ENCODE measurements at regions of chr15 and their contacts with region 1.

Region 1: GRCh38 chr15:49059491-49059890 is 13.2 kb upstream of the SECISBP2L start:
- DNase-seq: no peak
- ATAC-seq: no peak
- H3K4me3 ChIP-seq: no peak overlapping the region
- H3K27ac ChIP-seq: no peak overlapping the region
- H3K4me1 ChIP-seq: no peaks in the 10 kb centered on the region
- H3K27me3 ChIP-seq: no peaks in the 10 kb centered on the region
- CTCF ChIP-seq: no peak
- POLR2A ChIP-seq: no peak

Region 2: DNA sequence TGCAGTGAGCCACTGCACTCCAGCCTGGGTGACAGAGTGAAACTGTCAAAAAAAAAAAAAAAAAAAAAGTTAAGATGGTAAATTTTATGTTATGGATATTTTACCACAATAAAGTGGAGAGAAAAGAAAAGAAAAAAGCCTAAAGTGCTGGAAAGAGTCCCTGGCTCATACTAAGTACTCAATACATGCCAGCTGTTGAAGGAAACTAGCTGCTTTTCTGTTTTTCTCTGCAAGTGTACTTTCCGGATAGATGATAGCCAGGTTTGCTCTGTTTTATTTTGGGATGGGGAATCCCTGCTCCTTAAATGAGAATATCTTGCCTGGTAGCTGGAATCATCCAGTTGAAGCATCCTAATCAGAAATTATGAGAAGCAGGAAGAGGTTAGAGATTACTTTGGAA is 170.7 kb before region 1 on chr15:
- intact Hi-C with region 1: loop called (anchors 10 kb)
- DNase-seq: no peak
- ATAC-seq: no peak
- H3K4me3 ChIP-seq: no peak overlapping the region
- H3K27ac ChIP-seq: no peak overlapping the region
- H3K4me1 ChIP-seq: no peaks in the 10 kb centered on the region
- H3K27me3 ChIP-seq: no peaks in the 10 kb centered on the region
- CTCF ChIP-seq: no peak
- POLR2A ChIP-seq: no peak

Region 3: GRCh38 chr15:48992545-48992944 is 66.9 kb before region 1 on chr15:
- intact Hi-C with region 1: loop called (anchors 10 kb)
- DNase-seq: no peak
- ATAC-seq: no peak
- H3K4me3 ChIP-seq: no peak overlapping the region
- H3K27ac ChIP-seq: no peak overlapping the region
- H3K4me1 ChIP-seq: no peaks in the 10 kb centered on the region
- H3K27me3 ChIP-seq: no peaks in the 10 kb centered on the region
- CTCF ChIP-seq: no peak
- POLR2A ChIP-seq: no peak

Region 4: DNA sequence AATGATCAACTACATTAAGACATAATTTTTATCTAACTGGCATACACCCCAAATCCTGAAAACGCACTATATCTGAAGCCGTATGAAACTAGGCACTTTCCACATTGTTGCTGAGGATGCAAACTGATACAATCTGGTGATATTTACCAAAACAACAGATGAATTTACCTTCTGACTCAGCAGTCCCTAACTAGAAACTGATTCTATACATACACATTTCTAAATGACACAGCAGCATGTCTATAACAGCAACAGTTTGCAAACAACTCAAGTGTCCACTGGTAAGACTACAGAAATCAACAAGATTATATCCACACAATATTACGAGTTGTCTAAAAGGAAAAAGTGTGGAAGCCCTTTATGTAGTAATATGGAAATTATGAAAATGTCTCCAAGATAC is 36.1 kb before region 1 on chr15:
- intact Hi-C with region 1: no loop called
- DNase-seq: no peak
- ATAC-seq: no peak
- H3K4me3 ChIP-seq: no peak overlapping the region
- H3K27ac ChIP-seq: no peak overlapping the region
- H3K4me1 ChIP-seq: no peaks in the 10 kb centered on the region
- H3K27me3 ChIP-seq: no peaks in the 10 kb centered on the region
- CTCF ChIP-seq: no peak
- POLR2A ChIP-seq: no peak

Region 5: GRCh38 chr15:49282366-49282765 is 222.9 kb after region 1 on chr15:
- intact Hi-C with region 1: no loop called
- DNase-seq: no peak
- ATAC-seq: no peak
- H3K4me3 ChIP-seq: no peak overlapping the region
- H3K27ac ChIP-seq: no peak overlapping the region
- H3K4me1 ChIP-seq: no peaks in the 10 kb centered on the region
- H3K27me3 ChIP-seq: no peaks in the 10 kb centered on the region
- CTCF ChIP-seq: no peak
- POLR2A ChIP-seq: no peak